ENCODE measurements at regions of chr1 and their contacts with region 1.

Region 1: GRCh38 chr1:67332653-67333529 is 25.2 kb downstream of the IL12RB2 start:
- DNase-seq: peak; percentile 64
- H3K4me3 Mint-ChIP-seq: peak overlapping the region; percentile 27
- H3K27ac Mint-ChIP-seq: peak overlapping the region; percentile 99
- H3K4me1 Mint-ChIP-seq: peaks cover 77% of the 10 kb centered on the region
- H3K27me3 Mint-ChIP-seq: no peaks in the 10 kb centered on the region

Region 2: GRCh38 chr1:66685670-66686069 is 647.2 kb before region 1 on chr1:
- intact Hi-C with region 1: no loop called
- DNase-seq: no peak
- H3K4me3 Mint-ChIP-seq: no peak overlapping the region
- H3K27ac Mint-ChIP-seq: no peak overlapping the region
- H3K4me1 Mint-ChIP-seq: no peaks in the 10 kb centered on the region
- H3K27me3 Mint-ChIP-seq: peaks cover 6% of the 10 kb centered on the region

Region 3: GRCh38 chr1:67162957-67163356 is 169.9 kb before region 1 on chr1:
- intact Hi-C with region 1: loop called (anchors 1 kb)
- DNase-seq: peak; percentile 62
- H3K4me3 Mint-ChIP-seq: peak overlapping the region; percentile 55
- H3K27ac Mint-ChIP-seq: peak overlapping the region; percentile 93
- H3K4me1 Mint-ChIP-seq: peaks cover 65% of the 10 kb centered on the region
- H3K27me3 Mint-ChIP-seq: no peaks in the 10 kb centered on the region

Region 4: GRCh38 chr1:67194209-67194863 is 138.6 kb before region 1 on chr1:
- intact Hi-C with region 1: loop called (anchors 1 kb)
- DNase-seq: no peak
- H3K4me3 Mint-ChIP-seq: no peak overlapping the region
- H3K27ac Mint-ChIP-seq: no peak overlapping the region
- H3K4me1 Mint-ChIP-seq: peaks cover 38% of the 10 kb centered on the region
- H3K27me3 Mint-ChIP-seq: no peaks in the 10 kb centered on the region

Region 5: DNA sequence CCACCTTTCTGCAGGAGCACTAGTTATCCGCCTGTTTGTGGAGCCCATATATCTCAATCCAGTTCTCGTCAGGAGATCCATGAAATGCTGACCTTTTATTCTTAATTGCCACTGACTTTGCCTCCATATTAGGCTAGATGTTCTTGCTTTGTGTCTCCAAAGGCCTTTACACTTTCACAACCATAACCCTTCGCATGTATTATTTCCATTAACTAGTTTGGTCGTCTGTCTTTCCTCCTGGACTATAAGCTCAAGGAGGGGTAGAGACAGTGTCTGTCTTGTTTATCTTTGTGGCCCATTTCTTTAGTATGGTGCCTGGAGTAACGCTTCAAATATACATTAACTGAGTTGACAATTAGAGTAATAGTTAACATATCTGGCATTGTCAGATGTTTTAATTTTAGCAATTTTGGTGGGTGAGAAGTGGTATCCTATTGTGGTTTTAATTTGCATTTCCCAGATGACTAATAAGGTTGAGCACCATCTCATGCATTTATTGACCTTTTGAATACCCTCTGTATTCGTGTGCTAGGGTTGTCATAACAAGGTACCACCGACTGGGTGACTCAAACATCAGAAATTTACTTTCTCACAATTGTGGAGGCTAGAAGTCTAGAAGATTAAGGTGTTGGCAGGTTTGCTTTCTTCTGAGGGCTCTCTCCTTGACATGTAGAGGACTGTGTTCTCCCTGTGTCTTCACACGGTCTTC is 47.0 kb before region 1 on chr1:
- intact Hi-C with region 1: loop called (anchors 1 kb)
- DNase-seq: no peak
- H3K4me3 Mint-ChIP-seq: peak overlapping the region; percentile 5
- H3K27ac Mint-ChIP-seq: peak overlapping the region; percentile 79
- H3K4me1 Mint-ChIP-seq: peaks cover 61% of the 10 kb centered on the region
- H3K27me3 Mint-ChIP-seq: no peaks in the 10 kb centered on the region

Region 6: GRCh38 chr1:67314696-67315095 is 18.2 kb before region 1 on chr1:
- intact Hi-C with region 1: loop called (anchors 1 kb)
- DNase-seq: no peak
- H3K4me3 Mint-ChIP-seq: peak overlapping the region; percentile 100
- H3K27ac Mint-ChIP-seq: peak overlapping the region; percentile 97
- H3K4me1 Mint-ChIP-seq: peaks cover 6% of the 10 kb centered on the region
- H3K27me3 Mint-ChIP-seq: no peaks in the 10 kb centered on the region

Measured in activated T-helper 1 cell treated with anti-CD3 and anti-CD28 coated beads, Interleukin-12 subunit alpha, Interleukin-12 subunit beta, Interleukin-2, Interleukin-4 antibody, amounts not matched to agents 30 ng/mL and 10 ng/mL and 1 ng/mL, durations not matched to agents 14 hours and 24 hours and 36 hours (primary cell).